Heart left ventricle (tissue), 16 donors: ENCODE measurements at regions of chr9 and their contacts with region 1.

Region 1: GRCh38 chr9:34430843-34431437 is 27.4 kb downstream of the FAM219A start:
- DNase-seq: peak; percentile 80 to 90 (median 84)
- ATAC-seq: peak; percentile 96 to 98 (median 98)
- H3K4me3 ChIP-seq: no peak overlapping the region
- H3K27ac ChIP-seq: peak overlapping the region in 1 of 12 donors; percentile 39
- H3K4me1 ChIP-seq: peaks cover 6 to 38% (median 19%) of the 10 kb centered on the region in 12 donors
- H3K27me3 ChIP-seq: no peaks in the 10 kb centered on the region
- CTCF ChIP-seq: no peak
- POLR2A ChIP-seq: no peak

Region 2: DNA sequence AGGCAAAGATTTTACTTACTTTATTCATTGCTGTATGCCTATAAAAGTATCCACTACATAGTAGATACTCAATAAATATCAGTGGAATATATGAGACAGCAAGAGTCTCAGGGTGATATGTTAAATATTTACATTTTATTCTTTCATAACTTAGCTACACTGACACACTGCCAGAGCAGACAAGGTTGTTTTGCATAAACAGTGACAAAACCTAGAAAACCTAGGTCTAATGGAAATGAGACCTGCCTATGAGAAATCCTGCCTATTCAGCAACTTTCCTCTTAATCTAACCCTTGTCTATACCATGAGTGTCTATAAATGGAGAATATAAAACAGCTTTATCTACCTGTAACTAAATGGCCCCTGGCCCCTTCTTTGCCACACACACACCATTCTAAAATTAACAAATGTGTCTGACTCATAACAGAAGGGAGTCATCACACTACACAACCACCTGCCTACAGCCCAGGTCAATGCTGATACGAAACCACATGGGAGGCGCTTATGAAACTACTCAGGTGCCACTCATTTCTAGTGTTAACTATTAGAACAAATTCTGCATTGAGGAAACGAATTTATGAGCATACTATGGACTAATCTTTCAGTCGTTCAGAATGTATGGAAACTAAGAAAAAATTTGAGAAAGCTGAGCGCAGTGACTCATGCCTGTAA is 442.6 kb before region 1 on chr9:
- intact Hi-C with region 1: no loop called
- DNase-seq: no peak
- ATAC-seq: no peak
- H3K4me3 ChIP-seq: no peak overlapping the region
- H3K27ac ChIP-seq: no peak overlapping the region
- H3K4me1 ChIP-seq: peaks cover 0 to 4% (median 0%) of the 10 kb centered on the region in 12 donors
- H3K27me3 ChIP-seq: no peaks in the 10 kb centered on the region
- CTCF ChIP-seq: no peak
- POLR2A ChIP-seq: no peak

Region 3: DNA sequence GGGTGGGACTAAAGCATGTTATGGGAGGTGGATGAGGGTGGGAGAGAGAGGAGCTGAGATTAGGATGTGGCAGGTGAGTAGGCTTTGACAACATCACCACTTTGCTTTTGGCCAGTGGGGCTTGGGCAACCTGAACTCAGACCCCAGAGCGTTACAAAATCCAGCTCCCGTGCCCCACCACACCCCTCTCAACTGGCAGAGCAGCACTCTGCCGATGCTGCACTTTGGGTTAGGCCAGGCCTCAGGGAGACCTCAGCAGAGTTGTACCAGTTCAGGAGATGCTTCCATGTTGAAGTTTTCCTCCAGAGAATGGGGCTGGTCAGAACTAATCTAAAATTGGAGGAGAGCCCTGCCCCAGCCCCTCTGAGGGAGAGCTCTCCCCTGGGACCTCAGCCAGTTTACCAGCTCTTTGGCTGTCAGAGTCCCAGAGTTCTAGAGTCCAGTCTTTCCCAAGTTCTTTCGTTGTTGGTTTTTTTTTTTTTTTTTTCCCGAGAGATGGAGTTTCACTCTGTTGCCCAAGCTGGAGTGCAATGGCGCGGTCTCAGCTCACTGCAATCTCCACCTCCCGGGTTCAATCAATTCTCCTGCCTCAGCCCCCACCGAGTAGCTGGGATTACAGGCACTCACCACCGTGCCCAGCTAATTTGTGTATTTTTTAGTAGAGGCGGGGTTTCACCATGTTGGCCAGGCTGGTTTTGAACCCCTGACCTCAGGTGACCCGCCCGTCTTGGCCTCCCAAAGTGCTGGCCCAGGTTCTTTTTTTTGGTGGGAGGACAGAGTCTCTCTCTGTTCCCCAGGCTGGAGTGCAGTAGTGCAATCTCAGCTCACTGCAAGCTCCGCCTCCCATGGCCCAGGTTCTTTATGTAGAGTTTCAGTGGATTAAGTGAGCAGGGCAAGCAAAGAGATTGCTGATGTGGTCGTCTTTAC is 83.8 kb before region 1 on chr9:
- intact Hi-C with region 1: no loop called
- DNase-seq: no peak
- ATAC-seq: no peak
- H3K4me3 ChIP-seq: no peak overlapping the region
- H3K27ac ChIP-seq: peak overlapping the region in 1 of 12 donors; percentile 84
- H3K4me1 ChIP-seq: peaks cover 0 to 34% (median 17%) of the 10 kb centered on the region in 12 donors
- H3K27me3 ChIP-seq: no peaks in the 10 kb centered on the region
- CTCF ChIP-seq: no peak
- POLR2A ChIP-seq: no peak

Region 4: GRCh38 chr9:34396276-34397214 is 34.4 kb before region 1 on chr9:
- intact Hi-C with region 1: loop called in 2 of 10 experiments (anchors 5 kb)
- DNase-seq: no peak
- ATAC-seq: no peak
- H3K4me3 ChIP-seq: no peak overlapping the region
- H3K27ac ChIP-seq: no peak overlapping the region
- H3K4me1 ChIP-seq: peaks cover 0 to 8% (median 0%) of the 10 kb centered on the region in 12 donors
- H3K27me3 ChIP-seq: no peaks in the 10 kb centered on the region
- CTCF ChIP-seq: no peak
- POLR2A ChIP-seq: no peak